Caco-2 (cell line): ENCODE measurements at regions of chr1 and their contacts with region 1.

Region 1: GRCh38 chr1:200279810-200280411 is 129.9 kb downstream of the ZNF281 start:
- DNase-seq: peak in 1 of 2 experiments; percentile 65
- H3K4me3 ChIP-seq: no peak overlapping the region
- H3K4me3 Mint-ChIP-seq: no peak overlapping the region
- H3K27ac Mint-ChIP-seq: no peak overlapping the region
- H3K4me1 ChIP-seq: peaks cover 24% of the 10 kb centered on the region
- H3K4me1 Mint-ChIP-seq: peaks cover 20% of the 10 kb centered on the region
- H3K27me3 ChIP-seq: no peaks in the 10 kb centered on the region
- H3K27me3 Mint-ChIP-seq: no peaks in the 10 kb centered on the region
- CTCF ChIP-seq: peak; percentile 61 to 72

Region 2: GRCh38 chr1:199612976-199613774 is 666.7 kb before region 1 on chr1:
- CTCF ChIA-PET with region 1: no interaction called
- POLR2A ChIA-PET with region 1: no interaction called
- intact Hi-C with region 1: no loop called
- DNase-seq: no peak
- H3K4me3 ChIP-seq: no peak overlapping the region
- H3K4me3 Mint-ChIP-seq: no peak overlapping the region
- H3K27ac Mint-ChIP-seq: no peak overlapping the region
- H3K4me1 ChIP-seq: no peaks in the 10 kb centered on the region
- H3K4me1 Mint-ChIP-seq: no peaks in the 10 kb centered on the region
- H3K27me3 ChIP-seq: no peaks in the 10 kb centered on the region; the same call in 1 of the 2 replicates
- H3K27me3 Mint-ChIP-seq: no peaks in the 10 kb centered on the region
- CTCF ChIP-seq: no peak

Region 3: GRCh38 chr1:199646761-199647160 is 633.1 kb before region 1 on chr1:
- CTCF ChIA-PET with region 1: no interaction called
- POLR2A ChIA-PET with region 1: no interaction called
- intact Hi-C with region 1: no loop called
- DNase-seq: no peak
- H3K4me3 ChIP-seq: no peak overlapping the region
- H3K4me3 Mint-ChIP-seq: no peak overlapping the region
- H3K27ac Mint-ChIP-seq: no peak overlapping the region
- H3K4me1 ChIP-seq: no peaks in the 10 kb centered on the region
- H3K4me1 Mint-ChIP-seq: no peaks in the 10 kb centered on the region
- H3K27me3 ChIP-seq: no peaks in the 10 kb centered on the region
- H3K27me3 Mint-ChIP-seq: no peaks in the 10 kb centered on the region
- CTCF ChIP-seq: no peak

Region 4: GRCh38 chr1:199954699-199955098 is 325.2 kb before region 1 on chr1:
- CTCF ChIA-PET with region 1: interaction called, 5 read pairs
- POLR2A ChIA-PET with region 1: no interaction called
- intact Hi-C with region 1: loop called (anchors 1 kb)
- DNase-seq: peak; percentile 53 to 58
- H3K4me3 ChIP-seq: no peak overlapping the region
- H3K4me3 Mint-ChIP-seq: no peak overlapping the region
- H3K27ac Mint-ChIP-seq: no peak overlapping the region
- H3K4me1 ChIP-seq: 0 out of 2 replicates have a peak, but pooled peaks cover 6% of the 10 kb centered on the region
- H3K4me1 Mint-ChIP-seq: peaks cover 7% of the 10 kb centered on the region
- H3K27me3 ChIP-seq: no peaks in the 10 kb centered on the region
- H3K27me3 Mint-ChIP-seq: no peaks in the 10 kb centered on the region
- CTCF ChIP-seq: peak; percentile 59 to 82

Region 5: DNA sequence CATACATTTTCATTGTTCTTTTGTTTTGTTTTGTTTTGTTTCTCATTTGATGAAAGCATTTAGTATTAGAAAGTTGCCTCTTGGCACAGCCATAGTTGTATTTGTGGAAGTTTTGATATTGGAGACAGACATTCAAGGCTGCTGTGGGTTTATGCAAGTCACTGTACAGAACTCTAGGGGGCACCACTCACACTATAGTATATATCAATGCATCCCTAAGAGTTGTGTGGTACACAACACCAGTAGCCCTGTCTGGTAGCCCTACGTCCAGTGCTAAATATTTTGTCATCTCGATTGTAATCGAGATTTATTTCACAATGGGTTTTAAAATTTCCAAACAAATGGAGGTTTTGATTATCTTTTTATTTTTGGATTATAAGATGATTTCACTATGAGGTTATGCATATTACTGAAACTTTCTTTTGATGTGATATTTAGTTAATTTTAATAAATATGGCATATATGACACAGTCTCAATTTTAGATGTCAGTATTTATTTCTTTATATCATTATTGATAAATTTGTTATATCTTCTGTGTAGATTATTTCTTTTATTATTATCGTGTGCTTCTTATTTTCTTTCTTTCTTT is 140.2 kb before region 1 on chr1:
- CTCF ChIA-PET with region 1: no interaction called
- POLR2A ChIA-PET with region 1: no interaction called
- intact Hi-C with region 1: loop called (anchors 1 kb)
- DNase-seq: peak in 1 of 2 experiments; percentile 42
- H3K4me3 ChIP-seq: no peak overlapping the region
- H3K4me3 Mint-ChIP-seq: no peak overlapping the region
- H3K27ac Mint-ChIP-seq: no peak overlapping the region
- H3K4me1 ChIP-seq: no peaks in the 10 kb centered on the region
- H3K4me1 Mint-ChIP-seq: no peaks in the 10 kb centered on the region
- H3K27me3 ChIP-seq: no peaks in the 10 kb centered on the region
- H3K27me3 Mint-ChIP-seq: no peaks in the 10 kb centered on the region
- CTCF ChIP-seq: peak; percentile 41 to 54

Region 6: GRCh38 chr1:200217709-200218108 is 62.2 kb before region 1 on chr1:
- CTCF ChIA-PET with region 1: no interaction called
- POLR2A ChIA-PET with region 1: no interaction called
- intact Hi-C with region 1: no loop called
- DNase-seq: no peak
- H3K4me3 ChIP-seq: no peak overlapping the region
- H3K4me3 Mint-ChIP-seq: no peak overlapping the region
- H3K27ac Mint-ChIP-seq: no peak overlapping the region
- H3K4me1 ChIP-seq: no peaks in the 10 kb centered on the region
- H3K4me1 Mint-ChIP-seq: no peaks in the 10 kb centered on the region
- H3K27me3 ChIP-seq: no peaks in the 10 kb centered on the region
- H3K27me3 Mint-ChIP-seq: no peaks in the 10 kb centered on the region
- CTCF ChIP-seq: no peak

Region 7: DNA sequence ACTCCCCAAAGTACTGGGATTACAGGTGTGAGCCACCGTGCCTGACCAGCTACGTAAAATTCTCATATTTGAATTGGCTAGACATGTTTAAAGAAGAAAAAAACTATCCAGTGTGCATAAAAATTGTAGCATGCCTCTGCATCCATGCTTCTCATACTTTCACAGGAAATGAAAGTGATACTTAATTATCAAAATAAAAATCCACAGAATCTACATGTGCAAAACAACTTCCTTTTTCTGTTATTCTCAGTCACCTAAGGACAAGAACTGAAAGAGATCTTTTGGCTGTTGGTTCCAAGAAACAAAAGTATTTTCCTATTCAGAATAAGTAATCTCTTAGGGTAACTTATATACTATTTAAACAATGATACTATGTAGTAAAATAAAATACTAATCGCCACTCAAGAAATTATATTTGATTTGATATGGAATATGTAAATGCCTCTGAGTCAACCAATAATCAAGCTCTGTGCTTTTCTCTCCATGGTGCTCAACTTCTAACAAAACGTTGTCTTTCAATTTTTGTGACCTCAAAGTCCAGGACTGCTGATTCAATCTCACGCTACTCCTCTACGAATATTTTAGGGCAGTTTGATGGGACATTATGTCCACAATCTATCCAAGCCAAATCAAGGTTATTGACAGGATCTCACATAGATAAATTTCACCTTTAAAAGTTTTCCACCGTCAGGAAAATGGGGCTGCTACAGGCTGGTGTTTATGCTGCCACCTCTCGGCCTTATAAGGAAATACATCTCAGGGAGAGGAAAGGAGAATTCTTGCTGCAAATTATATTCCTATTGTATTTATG is 27.2 kb after region 1 on chr1:
- CTCF ChIA-PET with region 1: no interaction called
- POLR2A ChIA-PET with region 1: no interaction called
- intact Hi-C with region 1: loop called (anchors 1 kb)
- DNase-seq: peak in 1 of 2 experiments; percentile 47
- H3K4me3 ChIP-seq: no peak overlapping the region
- H3K4me3 Mint-ChIP-seq: no peak overlapping the region
- H3K27ac Mint-ChIP-seq: no peak overlapping the region
- H3K4me1 ChIP-seq: no peaks in the 10 kb centered on the region
- H3K4me1 Mint-ChIP-seq: no peaks in the 10 kb centered on the region
- H3K27me3 ChIP-seq: no peaks in the 10 kb centered on the region
- H3K27me3 Mint-ChIP-seq: no peaks in the 10 kb centered on the region
- CTCF ChIP-seq: peak; percentile 77 to 83

Region 8: DNA sequence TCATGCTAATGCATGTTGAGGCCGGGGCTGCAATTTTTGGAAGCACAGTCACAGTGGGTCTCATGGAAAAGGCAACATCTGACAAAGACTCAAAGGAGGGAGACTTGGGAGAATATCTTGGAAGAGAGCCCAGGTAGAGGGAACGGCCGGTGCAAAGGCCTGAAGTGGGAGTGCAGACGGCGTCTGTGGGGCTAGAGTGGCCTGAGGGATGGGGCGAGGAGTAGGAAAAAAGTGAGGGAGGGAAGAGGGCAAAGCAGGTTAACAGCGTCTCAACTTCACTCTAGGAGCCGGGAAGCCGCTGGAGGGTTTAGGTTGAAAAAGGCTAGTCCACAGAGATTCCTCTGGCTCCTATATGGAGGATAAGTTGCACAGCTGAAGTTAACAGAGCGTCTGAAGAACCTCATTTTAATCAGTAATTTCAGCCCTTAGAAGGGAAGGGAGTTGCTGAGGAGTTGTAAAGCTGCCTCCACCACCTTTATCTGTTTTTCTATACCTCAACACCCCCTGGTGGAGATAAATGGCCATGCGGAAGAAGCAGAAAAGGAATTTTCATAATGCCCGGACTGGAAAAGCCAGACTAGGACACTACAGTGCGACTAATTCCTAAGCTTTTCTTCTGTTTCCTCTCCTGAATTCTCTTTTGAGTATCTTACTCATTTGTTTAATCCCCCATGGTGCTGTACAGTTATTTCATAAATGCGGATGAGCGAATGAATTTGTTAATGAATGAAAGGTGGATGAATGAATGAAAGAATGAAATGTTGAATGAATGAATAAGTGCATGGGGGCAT is 208.7 kb after region 1 on chr1:
- CTCF ChIA-PET with region 1: no interaction called
- POLR2A ChIA-PET with region 1: no interaction called
- intact Hi-C with region 1: loop called (anchors 1 kb)
- DNase-seq: peak; percentile 72 to 82
- H3K4me3 ChIP-seq: no peak overlapping the region
- H3K4me3 Mint-ChIP-seq: no peak overlapping the region
- H3K27ac Mint-ChIP-seq: peak overlapping the region; percentile 67
- H3K4me1 ChIP-seq: no peaks in the 10 kb centered on the region
- H3K4me1 Mint-ChIP-seq: peaks cover 18% of the 10 kb centered on the region
- H3K27me3 ChIP-seq: no peaks in the 10 kb centered on the region
- H3K27me3 Mint-ChIP-seq: no peaks in the 10 kb centered on the region
- CTCF ChIP-seq: peak; percentile 76 to 83